Transverse colon (tissue), 4 donors: ENCODE measurements at regions of chr15 and their contacts with region 1.

Region 1: DNA sequence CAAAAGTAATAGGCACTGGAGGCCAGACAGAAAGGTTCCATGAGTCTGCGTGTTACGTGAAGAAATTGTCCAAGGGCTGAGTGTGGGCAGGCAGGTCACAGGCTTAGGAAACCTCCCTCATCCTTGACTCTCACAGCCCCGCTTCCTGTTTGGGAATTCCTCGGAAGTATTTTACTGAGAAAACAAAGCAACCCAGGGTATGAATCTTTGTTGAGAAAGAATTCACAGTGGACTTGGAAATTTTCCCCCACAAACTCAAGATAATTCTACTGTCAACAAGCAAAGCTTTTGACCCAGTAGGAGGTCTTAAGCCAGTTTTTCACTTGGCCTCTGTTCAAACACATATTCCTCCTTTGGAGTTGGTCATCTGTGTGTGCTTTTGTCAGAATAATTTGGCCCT is 377.1 kb upstream of the TPM1 start:
- DNase-seq: no peak
- H3K4me3 ChIP-seq: no peak overlapping the region
- H3K27ac ChIP-seq: no peak overlapping the region
- H3K4me1 ChIP-seq: peaks cover 0 to 14% (median 3%) of the 10 kb centered on the region in 4 donors
- H3K27me3 ChIP-seq: no peaks in the 10 kb centered on the region
- CTCF ChIP-seq: no peak
- EP300 ChIP-seq: no peak
- POLR2A ChIP-seq: no peak

Region 2: DNA sequence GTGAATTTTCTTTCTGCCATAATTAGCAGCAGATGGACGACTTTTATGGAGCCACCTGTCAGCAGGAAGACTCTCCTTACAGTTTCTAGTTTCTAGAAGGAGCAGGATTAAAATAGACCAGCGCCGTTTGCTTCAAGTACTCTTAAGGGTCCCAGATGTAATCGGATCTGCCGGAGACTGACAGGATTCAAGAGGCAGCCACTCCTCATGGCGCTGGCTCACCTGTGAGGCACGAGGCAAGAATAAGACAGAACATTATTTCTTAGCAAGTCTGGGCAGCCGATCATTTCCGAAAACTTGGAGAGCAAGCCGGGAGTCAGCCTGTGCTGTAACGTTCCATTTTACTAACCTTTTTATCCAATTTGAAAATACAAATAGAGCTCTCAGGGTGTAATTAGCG is 1026.0 kb before region 1 on chr15:
- in situ Hi-C with region 1: no loop called
- intact Hi-C with region 1: no loop called
- DNase-seq: no peak
- H3K4me3 ChIP-seq: no peak overlapping the region
- H3K27ac ChIP-seq: no peak overlapping the region
- H3K4me1 ChIP-seq: no peaks in the 10 kb centered on the region
- H3K27me3 ChIP-seq: no peaks in the 10 kb centered on the region
- CTCF ChIP-seq: no peak
- EP300 ChIP-seq: no peak
- POLR2A ChIP-seq: no peak

Region 3: DNA sequence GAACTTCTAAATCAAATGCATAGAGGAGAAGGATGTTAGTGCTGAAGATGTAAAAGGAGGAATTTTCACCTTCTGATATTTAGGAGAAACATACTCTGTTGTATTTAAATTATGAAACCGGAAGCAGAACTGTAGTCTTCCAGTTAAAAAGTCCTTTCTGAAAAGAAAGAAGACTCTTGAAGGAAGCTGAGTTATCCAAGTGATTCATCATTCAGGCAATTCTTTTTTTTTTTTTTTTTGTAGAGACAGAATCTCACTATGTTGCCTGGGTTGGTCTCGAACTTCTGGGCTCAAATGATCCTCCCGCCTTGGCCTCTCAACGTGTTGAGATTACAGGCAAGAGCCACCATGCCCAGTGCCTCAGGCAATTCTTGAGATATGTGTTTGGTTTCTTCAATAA is 47.7 kb before region 1 on chr15:
- in situ Hi-C with region 1: no loop called
- intact Hi-C with region 1: loop called (anchors 2 kb)
- DNase-seq: no peak
- H3K4me3 ChIP-seq: no peak overlapping the region
- H3K27ac ChIP-seq: no peak overlapping the region
- H3K4me1 ChIP-seq: peaks cover 0 to 15% (median 7%) of the 10 kb centered on the region in 4 donors
- H3K27me3 ChIP-seq: no peaks in the 10 kb centered on the region
- CTCF ChIP-seq: no peak
- EP300 ChIP-seq: no peak
- POLR2A ChIP-seq: no peak

Region 4: DNA sequence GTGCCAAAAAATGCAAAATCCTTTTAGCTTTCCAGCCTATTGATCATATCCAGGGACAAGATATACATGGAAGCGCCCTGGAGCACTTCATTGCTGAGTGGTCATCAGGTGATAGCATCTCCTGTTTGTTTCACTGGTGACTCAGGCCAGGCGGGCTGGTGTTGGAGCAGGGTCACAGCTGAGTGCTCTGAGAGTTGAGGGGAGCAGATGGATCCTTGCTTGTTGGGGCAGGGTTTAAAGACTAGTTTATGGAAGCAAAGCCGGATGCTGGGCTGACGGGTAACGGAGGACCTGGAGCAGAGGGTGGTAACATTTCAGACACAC is 27.9 kb before region 1 on chr15:
- in situ Hi-C with region 1: no loop called
- intact Hi-C with region 1: loop called (anchors 1 kb)
- DNase-seq: no peak
- H3K4me3 ChIP-seq: no peak overlapping the region
- H3K27ac ChIP-seq: no peak overlapping the region
- H3K4me1 ChIP-seq: peaks cover 0 to 28% (median 14%) of the 10 kb centered on the region in 4 donors
- H3K27me3 ChIP-seq: no peaks in the 10 kb centered on the region
- CTCF ChIP-seq: no peak
- EP300 ChIP-seq: no peak
- POLR2A ChIP-seq: no peak

Region 5: GRCh38 chr15:62950462-62950931 is 285.0 kb after region 1 on chr15:
- in situ Hi-C with region 1: no loop called
- intact Hi-C with region 1: no loop called
- DNase-seq: no peak
- H3K4me3 ChIP-seq: no peak overlapping the region
- H3K27ac ChIP-seq: no peak overlapping the region
- H3K4me1 ChIP-seq: no peaks in the 10 kb centered on the region
- H3K27me3 ChIP-seq: peaks cover 8% of the 10 kb centered on the region
- CTCF ChIP-seq: no peak
- EP300 ChIP-seq: no peak
- POLR2A ChIP-seq: no peak

Region 6: DNA sequence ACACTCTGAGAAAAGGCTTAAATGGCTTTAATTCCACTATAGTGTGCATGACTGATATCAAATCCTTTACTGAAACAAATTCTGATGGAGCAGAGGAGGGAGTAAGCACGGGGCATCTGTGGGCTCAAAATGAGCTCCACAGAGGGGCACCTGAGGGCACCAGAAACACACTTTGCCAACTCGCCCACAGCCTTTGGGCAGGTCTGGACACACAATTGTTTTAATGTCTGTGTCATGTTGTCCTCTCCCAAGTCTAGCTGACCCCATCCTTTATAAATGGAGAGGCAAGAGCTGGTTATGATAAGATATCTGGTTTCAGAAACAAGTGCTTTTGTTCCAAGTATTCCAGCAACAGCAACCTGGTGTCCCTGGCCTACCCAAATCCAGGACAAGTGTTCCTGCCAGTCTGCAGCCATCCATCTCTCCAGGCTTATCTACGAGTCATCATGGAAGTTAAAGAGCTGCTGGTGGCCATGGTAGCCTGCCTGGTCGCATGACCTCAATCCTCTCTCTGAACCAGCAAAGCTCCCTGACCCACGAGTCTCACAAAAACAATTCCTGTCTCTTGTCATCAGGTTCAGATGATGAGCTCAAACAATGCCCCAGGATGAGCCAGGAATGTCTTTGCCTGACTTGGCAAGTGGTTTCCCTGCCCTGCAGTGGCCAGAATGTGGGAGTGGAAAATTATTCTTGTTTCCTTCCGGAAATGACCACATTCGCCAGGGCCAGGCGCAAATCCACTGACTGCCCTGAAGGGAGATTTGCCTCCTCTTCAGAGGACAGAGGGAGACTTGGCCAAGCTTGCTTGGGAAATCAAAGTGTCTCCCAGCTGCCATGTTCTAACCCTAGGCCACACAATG is 312.7 kb after region 1 on chr15:
- in situ Hi-C with region 1: no loop called
- intact Hi-C with region 1: no loop called
- DNase-seq: no peak
- H3K4me3 ChIP-seq: no peak overlapping the region
- H3K27ac ChIP-seq: no peak overlapping the region
- H3K4me1 ChIP-seq: no peaks in the 10 kb centered on the region
- H3K27me3 ChIP-seq: no peaks in the 10 kb centered on the region
- CTCF ChIP-seq: no peak
- EP300 ChIP-seq: no peak
- POLR2A ChIP-seq: no peak